ENCODE measurements at regions of chr17 and their contacts with region 1.

Region 1: DNA sequence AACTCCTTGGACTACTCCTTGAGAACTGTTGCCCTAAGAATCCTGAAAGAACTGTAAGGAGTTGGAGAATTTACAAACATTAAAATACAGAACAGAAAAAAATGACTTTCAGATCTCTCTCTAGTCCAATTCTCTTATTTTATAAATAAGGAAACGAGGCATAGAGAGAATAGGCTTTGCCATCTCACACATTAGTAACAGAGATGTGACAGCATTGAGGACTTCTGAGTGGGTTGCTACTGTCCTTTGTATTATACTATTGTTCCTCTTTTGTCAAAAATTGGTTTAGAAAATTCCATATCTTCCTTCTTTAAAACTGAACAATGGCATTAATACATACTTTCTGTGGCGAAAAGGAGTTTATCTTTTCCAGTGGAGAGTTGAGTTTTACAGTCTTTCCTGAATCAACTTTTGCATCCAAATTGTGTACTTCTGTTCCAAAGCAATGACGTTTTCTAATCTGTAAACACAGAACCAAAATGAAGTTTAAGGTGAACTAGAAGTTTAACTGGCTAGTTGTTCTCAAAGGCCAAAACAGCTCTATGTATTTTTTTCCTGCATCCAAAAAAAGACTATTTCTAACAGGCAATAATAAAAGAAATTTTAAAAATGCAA is 16.5 kb downstream of the BRIP1 start:
- DNase-seq: no peak
- ATAC-seq: no peak
- H3K4me3 Mint-ChIP-seq: no peak overlapping the region
- H3K27ac Mint-ChIP-seq: no peak overlapping the region
- H3K4me1 Mint-ChIP-seq: no peaks in the 10 kb centered on the region
- H3K27me3 Mint-ChIP-seq: no peaks in the 10 kb centered on the region
- CTCF ChIP-seq: no peak

Region 2: DNA sequence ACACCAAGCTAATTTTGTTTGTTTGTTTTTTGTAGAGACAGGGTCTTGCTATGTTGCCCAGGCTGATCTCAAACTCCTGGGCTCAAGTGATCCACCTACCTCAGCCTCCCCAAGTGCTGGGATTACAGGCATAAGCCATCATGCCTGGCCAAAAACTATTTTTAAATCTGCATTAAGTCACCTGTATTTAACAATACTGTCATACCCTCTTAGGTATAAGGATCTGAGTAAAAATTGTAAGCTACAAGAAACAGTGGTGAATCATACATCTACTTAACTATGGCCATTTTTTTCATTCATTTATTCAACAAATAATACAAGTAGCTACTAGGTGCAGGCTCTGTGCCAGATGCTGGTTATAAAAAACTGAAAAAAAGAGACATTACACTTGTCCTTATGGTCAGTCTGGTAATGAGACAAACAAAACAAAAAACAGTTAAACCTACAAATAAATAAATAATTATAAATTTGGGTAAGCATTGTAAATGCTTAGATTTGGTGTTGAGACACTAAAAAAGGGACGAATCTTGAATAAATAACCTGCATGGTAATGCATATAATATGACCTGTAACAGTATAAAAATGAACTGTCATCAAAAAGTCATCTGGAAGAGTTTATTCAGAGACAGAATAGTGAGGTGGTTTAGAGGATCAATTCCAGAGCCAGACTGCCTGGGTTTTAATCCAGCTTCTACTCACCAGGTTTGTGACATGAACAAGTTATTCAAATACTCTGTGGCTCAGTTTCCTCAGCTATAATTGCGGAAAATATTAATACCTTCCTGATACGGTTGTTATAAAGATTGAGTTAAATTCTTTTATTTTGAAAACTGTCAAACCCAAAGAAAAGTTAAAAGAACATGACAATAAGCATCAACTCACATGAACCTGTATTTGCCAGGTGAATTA is 10.3 kb before region 1 on chr17:
- CTCF ChIA-PET with region 1: no interaction called
- POLR2A ChIA-PET with region 1: interaction called, 13 read pairs
- DNase-seq: no peak
- ATAC-seq: no peak
- H3K4me3 Mint-ChIP-seq: no peak overlapping the region
- H3K27ac Mint-ChIP-seq: no peak overlapping the region
- H3K4me1 Mint-ChIP-seq: 0 out of 2 replicates have a peak, but pooled peaks cover 7% of the 10 kb centered on the region
- H3K27me3 Mint-ChIP-seq: no peaks in the 10 kb centered on the region
- CTCF ChIP-seq: no peak